GM12878 (cell line): ENCODE measurements at regions of chr17 and their contacts with region 1.

Region 1: GRCh38 chr17:80737106-80738019 is 192.7 kb downstream of the RPTOR start:
- DNase-seq: peak; percentile 81
- ATAC-seq: peak; percentile 95
- H3K4me3 ChIP-seq: peak overlapping the region; percentile 51; the same call in 1 of the 2 replicates
- H3K27ac ChIP-seq: peak overlapping the region; percentile 76
- H3K4me1 ChIP-seq: peaks cover 28% of the 10 kb centered on the region
- H3K27me3 ChIP-seq: no peaks in the 10 kb centered on the region
- CTCF ChIP-seq: peak; percentile 41 to 44 (median 41); a peak in 5 of 6 replicates
- EP300 ChIP-seq: peak; percentile 45 to 93
- POLR2A ChIP-seq: 0 out of 2 replicates have a peak, but pooled peaks have one; percentile 33
- RAD21 ChIP-seq: peak; percentile 46

Region 2: DNA sequence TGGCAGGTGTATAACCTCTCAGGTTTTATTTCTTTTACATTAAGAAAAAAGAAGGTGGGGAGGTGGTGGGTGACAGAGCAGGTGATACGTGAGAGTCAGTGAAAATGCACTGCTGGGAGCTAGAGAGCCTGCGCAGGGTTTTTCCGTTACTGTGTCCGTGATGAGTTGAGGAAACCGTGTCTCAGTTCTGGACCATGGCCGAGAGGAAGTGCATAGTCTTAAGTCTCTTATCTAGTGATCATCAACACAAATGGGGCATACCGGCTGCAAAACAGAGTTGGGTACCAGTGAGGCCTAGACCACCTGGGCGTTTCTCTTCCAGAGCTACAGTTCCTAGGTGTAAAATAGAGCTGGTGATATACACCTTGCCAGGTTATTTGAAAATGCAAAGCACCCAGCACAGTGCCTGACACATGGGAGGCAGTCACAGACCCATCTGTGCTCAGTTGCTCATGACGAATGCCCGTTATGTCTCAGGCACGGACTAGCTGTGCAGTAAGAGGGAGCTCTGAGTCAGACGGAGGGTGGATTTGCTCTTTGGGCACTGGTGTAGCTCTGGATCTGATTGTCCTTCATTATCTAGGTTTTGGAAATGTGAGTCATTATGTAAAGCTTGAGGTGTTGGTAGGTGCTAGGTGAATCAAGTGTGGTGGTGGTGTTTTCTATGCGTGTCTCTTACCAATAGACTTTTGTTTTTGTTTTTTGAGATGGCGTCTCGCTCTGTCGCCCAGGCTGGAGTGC is 131.9 kb before region 1 on chr17:
- CTCF ChIA-PET with region 1: interaction called, 4 read pairs
- POLR2A ChIA-PET with region 1: no interaction called
- RAD21 ChIA-PET with region 1: interaction called, 4 read pairs
- SMC1A ChIA-PET with region 1: interaction called, 14 read pairs
- in situ Hi-C with region 1: no loop called
- intact Hi-C with region 1: no loop called
- DNase-seq: peak; percentile 85
- ATAC-seq: peak; percentile 98
- H3K4me3 ChIP-seq: peak overlapping the region; percentile 57
- H3K27ac ChIP-seq: peak overlapping the region; percentile 95
- H3K4me1 ChIP-seq: peaks cover 31% of the 10 kb centered on the region
- H3K27me3 ChIP-seq: no peaks in the 10 kb centered on the region
- CTCF ChIP-seq: no peak
- EP300 ChIP-seq: no peak
- POLR2A ChIP-seq: peak; percentile 65; the same call in 1 of the 2 replicates
- RAD21 ChIP-seq: 0 out of 2 replicates have a peak, but pooled peaks have one; percentile 9

Region 3: GRCh38 chr17:80780381-80781198 is 43.2 kb after region 1 on chr17:
- CTCF ChIA-PET with region 1: no interaction called
- POLR2A ChIA-PET with region 1: interaction called, 3 read pairs
- RAD21 ChIA-PET with region 1: interaction called, 5 read pairs
- SMC1A ChIA-PET with region 1: no interaction called
- in situ Hi-C with region 1: no loop called
- intact Hi-C with region 1: loop called (anchors 5 kb)
- DNase-seq: peak; percentile 61
- ATAC-seq: peak; percentile 93
- H3K4me3 ChIP-seq: peak overlapping the region; percentile 45; the same call in 1 of the 2 replicates
- H3K27ac ChIP-seq: peak overlapping the region; percentile 70
- H3K4me1 ChIP-seq: peaks cover 31% of the 10 kb centered on the region
- H3K27me3 ChIP-seq: no peaks in the 10 kb centered on the region
- CTCF ChIP-seq: no peak
- EP300 ChIP-seq: peak in 1 of 2 experiments; percentile 57; a peak in 1 of 4 replicates
- POLR2A ChIP-seq: no peak
- RAD21 ChIP-seq: no peak

Region 4: GRCh38 chr17:80791758-80792284 is 54.5 kb after region 1 on chr17:
- CTCF ChIA-PET with region 1: no interaction called
- POLR2A ChIA-PET with region 1: interaction called, 3 read pairs
- RAD21 ChIA-PET with region 1: interaction called, 4 read pairs
- SMC1A ChIA-PET with region 1: interaction called, 24 read pairs
- in situ Hi-C with region 1: no loop called
- intact Hi-C with region 1: no loop called
- DNase-seq: no peak
- ATAC-seq: no peak
- H3K4me3 ChIP-seq: no peak overlapping the region
- H3K27ac ChIP-seq: peak overlapping the region; percentile 51
- H3K4me1 ChIP-seq: peaks cover 39% of the 10 kb centered on the region
- H3K27me3 ChIP-seq: no peaks in the 10 kb centered on the region
- CTCF ChIP-seq: no peak
- EP300 ChIP-seq: no peak
- POLR2A ChIP-seq: no peak
- RAD21 ChIP-seq: no peak

Region 5: GRCh38 chr17:80832888-80833583 is 95.7 kb after region 1 on chr17:
- CTCF ChIA-PET with region 1: interaction called, 7 read pairs
- POLR2A ChIA-PET with region 1: no interaction called
- RAD21 ChIA-PET with region 1: interaction called, 5 read pairs
- SMC1A ChIA-PET with region 1: interaction called, 17 read pairs
- in situ Hi-C with region 1: no loop called
- intact Hi-C with region 1: loop called (anchors 1 kb)
- DNase-seq: peak; percentile 73
- ATAC-seq: peak; percentile 96
- H3K4me3 ChIP-seq: peak overlapping the region; percentile 65; the same call in 1 of the 2 replicates
- H3K27ac ChIP-seq: peak overlapping the region; percentile 95
- H3K4me1 ChIP-seq: peaks cover 16% of the 10 kb centered on the region
- H3K27me3 ChIP-seq: no peaks in the 10 kb centered on the region
- CTCF ChIP-seq: no peak; a peak in 1 of 6 replicates
- EP300 ChIP-seq: peak in 1 of 2 experiments; percentile 76; a peak in 3 of 4 replicates
- POLR2A ChIP-seq: peak; percentile 79
- RAD21 ChIP-seq: no peak

Region 6: DNA sequence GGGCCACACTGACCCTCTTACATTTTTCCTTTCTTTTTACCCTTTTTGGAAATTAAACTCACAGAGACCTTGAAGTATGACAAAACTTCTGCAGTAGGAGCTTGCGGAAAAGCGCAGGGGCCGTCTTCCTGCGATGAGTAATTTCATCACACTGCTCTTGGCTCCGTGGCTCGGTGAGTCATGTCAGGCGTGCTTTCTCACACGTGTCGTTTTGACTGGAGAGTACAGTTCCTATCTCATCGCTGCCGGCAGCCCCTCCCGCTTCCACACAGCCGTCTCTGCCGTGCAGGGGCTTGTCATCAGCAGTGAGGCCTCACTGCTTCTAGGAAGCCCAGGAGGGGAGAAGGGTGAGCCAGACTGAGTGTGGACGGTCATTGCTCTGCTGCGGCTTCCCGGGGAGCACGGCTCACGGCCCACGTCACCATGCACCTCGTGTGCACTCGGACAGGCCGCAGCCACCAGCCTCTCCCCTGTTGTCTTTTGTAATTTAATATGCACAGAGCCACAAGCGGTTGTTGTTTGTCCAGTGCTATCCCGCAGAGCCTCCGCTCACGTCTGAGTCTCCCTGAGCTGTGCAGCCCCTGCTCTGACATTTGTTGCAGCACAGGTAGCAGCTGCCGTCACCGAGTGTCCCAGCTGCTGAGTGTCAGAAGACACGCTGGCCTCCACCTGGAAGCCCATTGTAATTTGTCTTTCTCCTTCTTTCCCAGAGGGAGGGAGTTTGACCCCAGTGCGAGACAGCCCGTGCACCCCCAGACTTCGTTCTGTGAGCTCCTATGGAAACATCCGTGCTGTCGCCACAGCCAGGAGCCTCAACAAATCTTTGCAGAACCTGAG is 154.9 kb after region 1 on chr17:
- CTCF ChIA-PET with region 1: no interaction called
- POLR2A ChIA-PET with region 1: no interaction called
- RAD21 ChIA-PET with region 1: no interaction called
- SMC1A ChIA-PET with region 1: interaction called, 3 read pairs
- in situ Hi-C with region 1: no loop called
- intact Hi-C with region 1: loop called (anchors 5 kb)
- DNase-seq: peak; percentile 77
- ATAC-seq: peak; percentile 96
- H3K4me3 ChIP-seq: 0 out of 2 replicates have a peak overlapping the region, but pooled peaks have one; percentile 22
- H3K27ac ChIP-seq: peak overlapping the region; percentile 78
- H3K4me1 ChIP-seq: peaks cover 30% of the 10 kb centered on the region
- H3K27me3 ChIP-seq: no peaks in the 10 kb centered on the region
- CTCF ChIP-seq: no peak
- EP300 ChIP-seq: peak; percentile 34 to 43; a peak in 2 of 4 replicates
- POLR2A ChIP-seq: peak; percentile 49; the same call in 1 of the 2 replicates
- RAD21 ChIP-seq: no peak